Activated CD4-positive, alpha-beta memory T cell treated with anti-CD3 and anti-CD28 coated beads, Interleukin-2, amount 10 ng/mL, durations not matched to agents 7 days and 5 days (primary cell): ENCODE measurements at regions of chr5 and their contacts with region 1.

Region 1: GRCh38 chr5:57137401-57137800 is 36.5 kb upstream of the GPBP1 start:
- DNase-seq: no peak
- H3K4me3 Mint-ChIP-seq: no peak overlapping the region
- H3K27ac Mint-ChIP-seq: no peak overlapping the region
- H3K4me1 Mint-ChIP-seq: no peaks in the 10 kb centered on the region
- H3K27me3 Mint-ChIP-seq: peaks cover 8% of the 10 kb centered on the region

Region 2: GRCh38 chr5:56270568-56271392 is 866.6 kb before region 1 on chr5:
- CTCF ChIA-PET with region 1: interaction called, 15 read pairs
- POLR2A ChIA-PET with region 1: no interaction called
- DNase-seq: peak; percentile 82
- H3K4me3 Mint-ChIP-seq: no peak overlapping the region
- H3K27ac Mint-ChIP-seq: peak overlapping the region; percentile 0
- H3K4me1 Mint-ChIP-seq: peaks cover 17% of the 10 kb centered on the region
- H3K27me3 Mint-ChIP-seq: peaks cover 6% of the 10 kb centered on the region

Region 3: GRCh38 chr5:56876327-56876726 is 261.1 kb before region 1 on chr5:
- CTCF ChIA-PET with region 1: no interaction called
- POLR2A ChIA-PET with region 1: no interaction called
- DNase-seq: no peak
- H3K4me3 Mint-ChIP-seq: no peak overlapping the region
- H3K27ac Mint-ChIP-seq: no peak overlapping the region
- H3K4me1 Mint-ChIP-seq: peaks cover 8% of the 10 kb centered on the region
- H3K27me3 Mint-ChIP-seq: no peaks in the 10 kb centered on the region

Region 4: DNA sequence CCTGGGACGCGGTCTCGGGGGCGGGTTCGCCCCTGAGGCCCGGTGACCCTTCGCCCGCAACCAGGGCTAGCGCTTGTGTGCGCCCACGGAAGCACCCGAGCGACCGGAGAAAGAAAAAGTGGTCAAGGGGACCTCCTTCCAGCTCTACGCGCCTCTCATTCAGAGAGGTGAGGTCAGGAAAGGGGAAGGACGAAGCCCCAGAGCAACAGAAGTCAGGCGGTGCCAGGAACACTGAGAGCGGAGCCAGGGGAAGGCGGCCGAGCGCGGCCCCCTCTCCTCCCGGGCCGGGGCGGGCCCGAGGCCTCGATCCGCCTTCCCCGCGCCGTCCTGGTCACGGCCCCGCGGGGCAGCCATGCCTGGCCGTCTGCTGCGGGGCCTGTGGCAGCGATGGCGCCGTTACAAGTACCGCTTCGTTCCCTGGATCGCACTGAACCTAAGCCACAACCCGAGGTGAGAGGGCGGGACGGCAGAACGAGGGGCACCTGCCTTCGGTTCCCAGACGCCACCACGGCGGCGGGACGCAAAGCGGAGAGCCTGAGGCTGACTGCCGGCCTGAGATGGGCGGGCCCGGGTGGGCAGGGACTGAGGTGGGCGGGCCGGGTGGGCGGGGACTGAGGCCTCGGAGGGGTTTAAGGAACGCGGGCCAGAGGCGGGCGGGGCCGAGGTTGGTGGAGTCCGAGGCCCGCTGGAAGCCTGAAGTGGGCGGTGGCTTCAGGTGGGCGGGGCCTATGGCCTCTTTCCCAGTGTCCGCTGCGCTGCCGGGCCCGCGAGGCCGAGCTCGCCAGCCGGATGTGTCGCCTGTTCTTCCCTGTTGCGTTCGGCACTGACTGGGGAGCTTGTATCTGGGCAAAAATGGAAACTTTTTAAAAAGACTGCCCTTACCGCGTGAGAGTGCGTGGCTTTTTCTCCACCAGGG is 227.8 kb before region 1 on chr5 and contains the start of gene SETD9:
- CTCF ChIA-PET with region 1: interaction called, 13 read pairs
- POLR2A ChIA-PET with region 1: interaction called, 6 read pairs
- DNase-seq: peak; percentile 95
- H3K4me3 Mint-ChIP-seq: peak within 1 kb of the TSS; percentile 80
- H3K27ac Mint-ChIP-seq: peak within 1 kb of the TSS; percentile 75
- H3K4me1 Mint-ChIP-seq: peaks cover 22% of the 10 kb centered on the region
- H3K27me3 Mint-ChIP-seq: peaks cover 14% of the 10 kb centered on the region
- total RNA-seq, gene SETD9: 4.1 to 4.9 TPM

Region 5: DNA sequence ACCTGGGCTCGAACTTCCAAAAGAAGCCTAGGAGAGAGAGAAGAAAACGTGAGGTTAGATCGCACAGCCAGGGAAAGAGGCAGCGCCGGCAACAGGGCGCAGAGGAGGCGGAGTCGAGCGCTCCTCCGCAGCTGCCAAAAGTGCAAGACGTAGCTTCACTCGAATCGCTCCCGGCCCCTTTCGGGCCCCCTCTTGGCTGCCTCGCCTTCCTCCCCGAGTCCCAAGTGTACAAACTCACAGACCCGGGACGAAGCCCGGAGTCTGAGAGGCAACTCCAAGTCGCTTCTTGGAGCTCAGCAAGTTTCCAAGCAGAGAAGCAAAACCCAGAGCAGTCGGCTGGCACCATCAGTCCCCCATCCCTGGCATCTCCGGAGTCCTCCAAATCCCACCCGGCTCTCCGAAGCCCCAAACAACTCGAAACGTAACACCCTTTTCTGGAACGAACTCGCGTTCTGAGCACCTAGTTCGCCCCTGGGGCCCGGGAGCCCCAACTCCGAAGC is 186.7 kb before region 1 on chr5:
- CTCF ChIA-PET with region 1: interaction called, 20 read pairs
- POLR2A ChIA-PET with region 1: interaction called, 4 read pairs
- DNase-seq: peak; percentile 60
- H3K4me3 Mint-ChIP-seq: peak overlapping the region; percentile 91
- H3K27ac Mint-ChIP-seq: peak overlapping the region; percentile 77
- H3K4me1 Mint-ChIP-seq: peaks cover 22% of the 10 kb centered on the region
- H3K27me3 Mint-ChIP-seq: peaks cover 26% of the 10 kb centered on the region

Region 6: GRCh38 chr5:57173185-57174127 is 36.1 kb after region 1 on chr5 and contains the start of gene GPBP1:
- CTCF ChIA-PET with region 1: interaction called, 10 read pairs
- POLR2A ChIA-PET with region 1: no interaction called
- DNase-seq: peak; percentile 98
- H3K4me3 Mint-ChIP-seq: peak within 1 kb of the TSS; percentile 96
- H3K27ac Mint-ChIP-seq: peak within 1 kb of the TSS; percentile 99
- H3K4me1 Mint-ChIP-seq: peaks cover 26% of the 10 kb centered on the region
- H3K27me3 Mint-ChIP-seq: no peaks in the 10 kb centered on the region
- total RNA-seq, gene GPBP1: 105 to 109 TPM